ENCODE measurements at regions of chr14 and their contacts with region 1.

Region 1: GRCh38 chr14:102437997-102438915 is 71.3 kb downstream of the ANKRD9 start:
- DNase-seq: peak; percentile 71 to 86
- ATAC-seq: peak; percentile 40 to 51
- H3K4me3 ChIP-seq: peak overlapping the region; percentile 18 to 40 (median 32)
- H3K27ac ChIP-seq: peak overlapping the region; percentile 29 to 62 (median 48)
- H3K4me1 ChIP-seq: peaks cover 23 to 27% of the 10 kb centered on the region in 2 donors
- H3K27me3 ChIP-seq: no peaks in the 10 kb centered on the region
- CTCF ChIP-seq: peak; percentile 76 to 91 (median 83)
- POLR2A ChIP-seq: no peak

Region 2: DNA sequence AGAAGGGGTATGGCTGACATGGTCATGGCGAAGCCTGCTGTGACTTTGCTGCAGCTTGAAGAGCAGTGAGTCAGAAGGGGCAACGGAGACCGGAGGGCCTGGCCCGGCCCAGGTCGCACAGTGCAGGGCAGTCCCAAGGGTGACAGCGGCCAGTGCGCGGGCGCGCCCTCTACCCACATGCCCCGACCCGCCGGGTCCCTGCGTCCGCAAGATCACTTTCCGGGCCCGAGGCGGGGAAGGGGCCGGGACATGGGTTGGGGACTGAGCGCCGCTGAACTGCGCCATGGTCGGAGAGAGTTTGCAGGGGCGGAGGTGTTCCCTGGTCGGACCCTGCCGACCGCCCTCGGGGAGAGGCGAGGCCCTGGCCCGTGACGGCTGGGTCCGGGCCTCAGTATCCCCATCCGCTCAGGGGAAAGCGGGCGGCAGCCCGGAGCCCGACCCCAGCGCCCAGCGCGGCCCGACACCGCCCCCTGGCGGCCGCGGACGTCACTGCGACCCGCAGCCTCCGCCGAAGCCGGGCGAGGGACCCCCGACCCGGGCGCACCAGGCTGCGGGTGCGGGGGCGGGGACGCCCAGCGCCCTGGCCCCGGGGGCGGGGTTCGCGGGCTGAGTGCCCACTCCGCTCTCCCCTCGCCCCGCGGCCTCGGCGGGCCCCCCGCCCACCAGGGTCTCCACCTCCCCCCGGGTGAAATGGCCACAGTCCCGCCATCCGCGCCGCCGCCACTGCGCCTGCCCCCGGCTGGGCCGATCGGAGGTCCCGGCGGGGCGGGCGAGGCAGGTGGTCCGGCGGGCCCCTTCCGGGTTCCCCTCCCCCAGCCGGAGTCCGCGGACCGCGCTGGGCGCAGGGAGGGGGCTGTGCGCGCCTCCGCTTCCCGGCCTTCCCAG is 78.5 kb after region 1 on chr14:
- in situ Hi-C with region 1: loop called (anchors 5 kb)
- intact Hi-C with region 1: loop called (anchors 1 kb)
- DNase-seq: peak in 1 of 2 donors; percentile 48
- ATAC-seq: peak; percentile 75 to 79
- H3K4me3 ChIP-seq: peak overlapping the region; percentile 53 to 78 (median 66)
- H3K27ac ChIP-seq: peak overlapping the region; percentile 17 to 69 (median 62)
- H3K4me1 ChIP-seq: peaks cover 0 to 5% of the 10 kb centered on the region in 2 donors
- H3K27me3 ChIP-seq: no peaks in the 10 kb centered on the region
- CTCF ChIP-seq: peak; percentile 74 to 100 (median 100)
- POLR2A ChIP-seq: no peak